Naive thymus-derived CD4-positive, alpha-beta T cell (primary cell): ENCODE measurements at regions of chr6 and their contacts with region 1.

Region 1: DNA sequence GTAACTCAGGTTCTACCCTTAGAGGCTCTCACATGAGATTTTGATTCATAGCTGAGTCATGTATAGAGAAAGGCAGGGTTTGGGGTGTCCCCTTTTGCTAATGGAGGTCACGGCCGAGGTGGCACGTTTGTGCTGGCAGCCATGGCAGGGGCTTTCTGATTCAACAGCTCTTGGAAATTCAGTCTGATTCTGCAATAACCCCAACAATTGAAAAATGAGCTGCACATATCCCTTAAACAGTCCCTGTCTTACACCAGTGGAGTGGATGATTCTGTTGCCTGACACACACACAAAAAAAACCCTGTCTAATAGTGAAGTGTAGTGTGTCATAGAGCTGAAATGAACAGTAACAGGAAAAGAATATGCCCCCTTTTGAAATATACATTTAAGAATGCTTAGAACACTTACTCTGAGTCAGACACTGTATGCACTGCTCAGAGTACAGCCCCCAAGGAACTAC is 40.4 kb upstream of the ARG1 start:
- DNase-seq: peak in 1 of 9 donors; percentile 34
- ATAC-seq: peak; percentile 31
- H3K4me3 ChIP-seq: no peak overlapping the region
- H3K4me3 Mint-ChIP-seq: peak overlapping the region in 4 of 10 donors; percentile 7 to 49 (median 24)
- H3K27ac ChIP-seq: peak overlapping the region; percentile 51
- H3K27ac Mint-ChIP-seq: peak overlapping the region; percentile 1 to 94 (median 85)
- H3K4me1 ChIP-seq: peaks cover 4 to 34% of the 10 kb centered on the region in 2 donors
- H3K4me1 Mint-ChIP-seq: peaks cover 31 to 71% (median 62%) of the 10 kb centered on the region in 7 donors
- H3K27me3 ChIP-seq: no peaks in the 10 kb centered on the region
- H3K27me3 Mint-ChIP-seq: peaks cover 0 to 23% (median 4%) of the 10 kb centered on the region in 5 donors

Region 2: DNA sequence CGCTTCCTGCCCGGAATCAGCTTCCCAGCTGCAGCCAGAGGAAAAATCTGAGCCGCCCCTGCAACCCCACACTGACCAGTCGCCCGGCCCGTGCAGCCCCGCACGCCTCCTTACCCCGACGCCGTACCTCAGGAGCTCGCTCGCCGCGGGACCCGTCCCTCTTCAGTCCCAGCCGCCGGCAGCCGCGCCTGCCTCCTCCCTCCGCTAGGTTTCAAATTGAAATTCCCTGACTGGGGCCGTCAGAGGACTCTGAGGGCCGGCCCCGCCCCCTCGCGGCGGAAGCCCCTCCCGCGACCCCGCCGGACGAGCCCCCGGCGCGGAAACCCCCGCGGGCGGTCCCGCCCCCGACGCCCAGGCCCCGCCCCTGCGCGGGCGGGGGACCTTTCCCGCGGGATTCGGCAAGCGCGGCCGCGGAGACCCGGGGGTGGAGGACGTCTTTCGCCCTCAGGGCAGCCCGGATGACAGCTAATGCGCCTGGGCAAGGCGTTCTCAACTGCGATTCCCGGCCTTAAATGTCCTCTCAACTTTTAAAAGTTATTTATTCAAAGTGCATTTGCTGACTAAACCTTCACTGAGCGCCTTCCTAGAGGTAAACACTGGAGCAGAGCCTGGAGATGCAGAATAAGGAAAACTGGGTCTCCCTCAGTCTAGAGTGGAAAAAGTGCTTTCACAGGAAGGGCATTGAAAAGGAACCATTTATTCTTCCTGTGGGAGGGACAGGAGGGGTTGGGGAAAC is 469.4 kb before region 1 on chr6 and contains the start of gene EPB41L2:
- CTCF ChIA-PET with region 1: no interaction called
- POLR2A ChIA-PET with region 1: no interaction called
- intact Hi-C with region 1: loop called (anchors 5 kb)
- DNase-seq: peak; percentile 63 to 87 (median 73)
- ATAC-seq: peak; percentile 94
- H3K4me3 ChIP-seq: peak within 1 kb of the TSS; percentile 63
- H3K4me3 Mint-ChIP-seq: peak within 1 kb of the TSS; percentile 83 to 93 (median 90)
- H3K27ac ChIP-seq: peak within 1 kb of the TSS; percentile 67
- H3K27ac Mint-ChIP-seq: peak within 1 kb of the TSS; percentile 20 to 92 (median 77)
- H3K4me1 ChIP-seq: peaks cover 0 to 6% of the 10 kb centered on the region in 2 donors
- H3K4me1 Mint-ChIP-seq: peaks cover 8 to 27% (median 25%) of the 10 kb centered on the region in 7 donors
- H3K27me3 ChIP-seq: no peaks in the 10 kb centered on the region
- H3K27me3 Mint-ChIP-seq: peaks cover 0 to 35% (median 0%) of the 10 kb centered on the region in 5 donors
- total RNA-seq, gene EPB41L2: 10.3 to 26.9 (median 20.9) TPM

Region 3: GRCh38 chr6:131182991-131183425 is 349.6 kb before region 1 on chr6:
- CTCF ChIA-PET with region 1: interaction called, 65 read pairs
- POLR2A ChIA-PET with region 1: interaction called, 18 read pairs
- intact Hi-C with region 1: loop called (anchors 1 kb)
- DNase-seq: peak in 8 of 9 donors; percentile 6 to 57 (median 47)
- ATAC-seq: peak; percentile 83
- H3K4me3 ChIP-seq: no peak overlapping the region
- H3K4me3 Mint-ChIP-seq: peak overlapping the region; percentile 10 to 85 (median 72)
- H3K27ac ChIP-seq: no peak overlapping the region
- H3K27ac Mint-ChIP-seq: peak overlapping the region; percentile 86 to 98 (median 94)
- H3K4me1 ChIP-seq: peaks cover 0 to 8% of the 10 kb centered on the region in 2 donors
- H3K4me1 Mint-ChIP-seq: peaks cover 5 to 22% (median 17%) of the 10 kb centered on the region in 7 donors
- H3K27me3 ChIP-seq: no peaks in the 10 kb centered on the region
- H3K27me3 Mint-ChIP-seq: no peaks in the 10 kb centered on the region

Region 4: GRCh38 chr6:131281471-131282270 is 250.9 kb before region 1 on chr6:
- CTCF ChIA-PET with region 1: interaction called, 8 read pairs
- POLR2A ChIA-PET with region 1: interaction called, 7 read pairs
- intact Hi-C with region 1: loop called in 1 of 2 experiments (anchors 2 kb)
- DNase-seq: peak; percentile 24 to 89 (median 83)
- ATAC-seq: peak; percentile 95
- H3K4me3 ChIP-seq: peak overlapping the region; percentile 28
- H3K4me3 Mint-ChIP-seq: peak overlapping the region; percentile 75 to 91 (median 83)
- H3K27ac ChIP-seq: peak overlapping the region; percentile 80
- H3K27ac Mint-ChIP-seq: peak overlapping the region; percentile 96 to 99 (median 98)
- H3K4me1 ChIP-seq: peaks cover 17 to 49% of the 10 kb centered on the region in 2 donors
- H3K4me1 Mint-ChIP-seq: peaks cover 22 to 93% (median 82%) of the 10 kb centered on the region in 7 donors
- H3K27me3 ChIP-seq: no peaks in the 10 kb centered on the region
- H3K27me3 Mint-ChIP-seq: no peaks in the 10 kb centered on the region

Region 5: GRCh38 chr6:131460614-131461000 is 72.0 kb before region 1 on chr6:
- CTCF ChIA-PET with region 1: no interaction called
- POLR2A ChIA-PET with region 1: no interaction called
- intact Hi-C with region 1: loop called in 1 of 2 experiments (anchors 1 kb)
- DNase-seq: no peak
- ATAC-seq: no peak
- H3K4me3 ChIP-seq: no peak overlapping the region
- H3K4me3 Mint-ChIP-seq: no peak overlapping the region
- H3K27ac ChIP-seq: no peak overlapping the region
- H3K27ac Mint-ChIP-seq: peak overlapping the region in 2 of 9 donors; percentile 51 to 58
- H3K4me1 ChIP-seq: peaks cover 0 to 4% of the 10 kb centered on the region in 2 donors
- H3K4me1 Mint-ChIP-seq: peaks cover 0 to 10% (median 6%) of the 10 kb centered on the region in 7 donors
- H3K27me3 ChIP-seq: no peaks in the 10 kb centered on the region
- H3K27me3 Mint-ChIP-seq: no peaks in the 10 kb centered on the region

Region 6: DNA sequence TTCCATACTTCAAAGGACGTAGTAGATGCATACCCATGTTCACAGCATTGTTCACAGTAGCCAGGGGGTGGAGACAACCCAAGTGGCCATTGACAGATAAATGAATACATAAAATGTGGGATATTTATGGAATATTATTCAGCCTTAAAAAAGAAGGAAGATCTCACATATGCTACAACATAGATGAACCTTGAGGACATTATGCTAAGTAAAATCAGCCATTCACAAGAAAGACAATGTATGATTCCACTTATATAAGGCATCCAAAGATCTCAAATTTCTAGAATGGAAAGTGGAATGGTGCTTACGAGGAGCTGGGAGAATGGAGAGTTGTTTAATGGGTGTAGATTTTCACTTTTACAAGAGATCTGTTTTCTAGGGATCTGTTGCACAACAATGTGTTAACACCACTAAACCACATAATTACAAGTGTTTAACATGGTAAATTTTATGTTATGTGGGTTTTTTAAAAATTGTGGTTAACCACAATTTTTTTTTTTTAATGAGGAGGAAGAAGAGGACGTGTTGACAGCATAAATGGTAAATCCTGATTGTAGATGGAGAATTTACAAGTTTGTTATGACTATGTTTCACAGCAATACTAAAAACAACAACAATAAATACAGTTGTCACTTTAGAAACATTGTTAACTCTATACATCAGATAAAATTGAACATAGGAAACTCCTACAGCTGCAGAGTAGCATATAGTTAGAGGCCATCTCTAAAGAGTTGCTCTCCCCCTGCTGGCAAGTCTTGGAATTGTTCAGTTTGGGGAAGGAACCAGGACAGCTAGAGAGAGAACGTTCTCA is 377.0 kb after region 1 on chr6:
- CTCF ChIA-PET with region 1: no interaction called
- POLR2A ChIA-PET with region 1: no interaction called
- intact Hi-C with region 1: loop called in 1 of 2 experiments (anchors 1 kb)
- DNase-seq: peak; percentile 23 to 72 (median 62)
- ATAC-seq: peak; percentile 95
- H3K4me3 ChIP-seq: no peak overlapping the region
- H3K4me3 Mint-ChIP-seq: peak overlapping the region in 4 of 10 donors; percentile 16 to 42 (median 36)
- H3K27ac ChIP-seq: no peak overlapping the region
- H3K27ac Mint-ChIP-seq: peak overlapping the region in 3 of 9 donors; percentile 2 to 22 (median 5)
- H3K4me1 ChIP-seq: peaks cover 0 to 5% of the 10 kb centered on the region in 2 donors
- H3K4me1 Mint-ChIP-seq: peaks cover 6 to 8% (median 8%) of the 10 kb centered on the region in 7 donors
- H3K27me3 ChIP-seq: peaks cover 0 to 4% of the 10 kb centered on the region in 2 donors
- H3K27me3 Mint-ChIP-seq: peaks cover 11 to 38% (median 32%) of the 10 kb centered on the region in 5 donors